Left cardiac atrium (tissue), 4 donors: ENCODE measurements at regions of chr11 and their contacts with region 1.

Region 1: GRCh38 chr11:6315811-6316425 is 4.4 kb downstream of the CAVIN3 start:
- DNase-seq: peak; percentile 66
- ATAC-seq: peak in 1 of 2 donors; percentile 4

Region 2: DNA sequence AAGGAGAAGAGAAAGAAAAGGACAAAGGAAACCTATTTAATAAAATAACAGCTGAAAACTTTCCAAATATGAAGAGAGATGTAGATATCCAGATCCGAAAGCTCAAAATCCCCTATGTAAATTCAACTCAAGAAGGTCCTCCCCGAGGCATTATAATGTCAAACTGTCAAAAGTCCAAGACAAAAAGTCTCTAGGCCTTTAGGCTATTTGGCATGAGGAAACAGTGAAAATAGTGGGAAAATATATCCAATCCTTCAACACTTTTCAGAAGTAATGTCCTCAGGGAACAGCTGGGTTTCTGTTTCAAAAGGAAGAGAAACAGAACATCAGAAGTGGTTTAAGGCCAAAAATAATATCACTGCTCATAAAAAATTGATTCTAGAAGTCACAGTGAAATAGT is 437.4 kb before region 1 on chr11:
- intact Hi-C with region 1: no loop called
- DNase-seq: no peak
- ATAC-seq: no peak

Region 3: DNA sequence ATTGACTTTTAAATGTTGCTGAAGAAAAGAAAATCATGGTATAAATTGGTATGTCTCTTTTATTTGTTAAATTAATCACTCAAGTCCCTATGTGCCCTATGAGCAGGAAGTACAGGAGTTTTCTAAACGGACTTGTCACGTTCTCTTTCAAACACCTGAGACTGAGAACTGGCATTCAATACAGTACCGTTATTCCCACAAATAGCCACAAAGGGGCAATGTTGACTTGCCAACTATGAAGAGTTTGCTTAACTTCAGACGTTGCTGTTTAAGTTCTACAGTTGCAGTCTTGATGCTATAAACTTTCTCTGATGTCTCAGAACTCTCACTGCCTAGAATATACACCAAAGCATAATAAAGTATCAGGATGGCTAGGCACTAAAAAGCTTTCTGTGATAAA is 293.0 kb before region 1 on chr11:
- intact Hi-C with region 1: loop called in 1 of 2 experiments (anchors 5 kb)
- DNase-seq: no peak
- ATAC-seq: peak; percentile 74 to 76

Region 4: GRCh38 chr11:6234387-6235107 is 81.4 kb before region 1 on chr11 and contains the start of gene FHIP1B:
- intact Hi-C with region 1: loop called in 1 of 2 experiments (anchors 1 kb)
- DNase-seq: peak; percentile 100
- ATAC-seq: peak; percentile 97 to 98
- total RNA-seq, gene FHIP1B: 16.0 to 16.6 TPM

Region 5: DNA sequence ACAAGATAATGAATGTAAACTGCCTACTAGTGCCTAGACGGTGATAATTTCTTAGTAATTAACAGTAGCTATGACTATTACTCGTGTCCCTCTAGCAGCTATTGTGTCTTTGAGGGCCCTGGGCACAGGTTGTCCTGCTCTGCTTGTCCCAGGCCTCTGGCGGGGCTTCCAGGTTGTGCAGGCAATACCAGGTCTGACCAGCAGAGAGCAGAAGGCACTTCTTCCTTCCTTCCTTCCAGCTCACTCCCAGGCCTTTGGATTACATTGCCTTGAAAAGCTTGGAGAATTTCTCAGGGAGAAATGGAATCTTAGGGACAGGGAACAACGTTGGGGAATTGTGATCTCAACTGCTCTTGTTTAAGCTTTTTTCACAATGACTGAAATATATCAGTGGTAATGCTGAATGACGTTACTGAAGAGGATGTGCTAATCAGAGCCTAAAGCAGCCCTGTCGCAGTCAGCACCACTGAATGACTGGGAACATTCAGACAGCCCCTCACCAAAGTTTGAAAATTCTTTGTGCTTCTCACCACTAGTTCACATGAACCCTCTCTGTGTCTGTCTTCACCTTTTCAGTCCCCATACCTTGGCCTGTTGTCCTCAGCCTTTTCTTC is 64.7 kb before region 1 on chr11:
- intact Hi-C with region 1: loop called in 1 of 2 experiments (anchors 5 kb)
- DNase-seq: peak; percentile 58
- ATAC-seq: peak; percentile 79 to 83

Region 6: DNA sequence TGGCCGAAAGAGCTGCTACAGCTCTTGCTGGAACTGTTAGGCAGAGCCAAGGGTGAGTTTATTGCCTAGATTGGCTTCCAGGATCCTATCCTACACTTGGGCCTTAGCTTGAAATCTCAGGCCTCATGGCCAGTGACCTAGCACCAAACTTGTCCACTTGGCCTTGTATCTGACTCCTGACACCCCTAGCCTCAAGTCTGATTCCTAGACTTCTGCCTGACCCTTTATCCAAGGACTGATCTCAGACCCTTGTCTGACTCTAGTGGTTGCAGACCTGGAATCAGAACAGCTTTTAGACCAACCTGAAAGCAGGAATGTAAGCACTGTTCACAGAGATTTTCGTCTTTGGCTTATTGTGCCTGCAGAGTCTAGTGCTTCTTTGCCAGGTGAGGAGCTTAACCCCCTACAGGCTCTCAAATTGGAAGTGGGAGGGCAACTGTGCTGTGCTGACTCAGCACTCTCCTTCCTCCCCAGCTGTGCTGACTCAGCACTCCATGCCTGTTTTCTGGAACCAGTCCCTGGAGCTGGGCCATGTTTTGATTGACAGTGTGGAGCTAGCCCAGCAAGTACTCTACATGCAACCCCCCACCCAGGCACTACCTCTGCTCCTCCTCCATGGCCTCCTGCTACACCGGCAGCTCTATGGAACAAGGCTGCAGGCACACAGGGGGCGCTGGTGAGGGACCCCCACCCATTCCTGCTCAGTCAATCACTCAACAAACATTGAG is 252.4 kb after region 1 on chr11:
- intact Hi-C with region 1: no loop called
- DNase-seq: no peak
- ATAC-seq: peak; percentile 50 to 80